ENCODE measurements at regions of chr11 and their contacts with region 1.

Region 1: DNA sequence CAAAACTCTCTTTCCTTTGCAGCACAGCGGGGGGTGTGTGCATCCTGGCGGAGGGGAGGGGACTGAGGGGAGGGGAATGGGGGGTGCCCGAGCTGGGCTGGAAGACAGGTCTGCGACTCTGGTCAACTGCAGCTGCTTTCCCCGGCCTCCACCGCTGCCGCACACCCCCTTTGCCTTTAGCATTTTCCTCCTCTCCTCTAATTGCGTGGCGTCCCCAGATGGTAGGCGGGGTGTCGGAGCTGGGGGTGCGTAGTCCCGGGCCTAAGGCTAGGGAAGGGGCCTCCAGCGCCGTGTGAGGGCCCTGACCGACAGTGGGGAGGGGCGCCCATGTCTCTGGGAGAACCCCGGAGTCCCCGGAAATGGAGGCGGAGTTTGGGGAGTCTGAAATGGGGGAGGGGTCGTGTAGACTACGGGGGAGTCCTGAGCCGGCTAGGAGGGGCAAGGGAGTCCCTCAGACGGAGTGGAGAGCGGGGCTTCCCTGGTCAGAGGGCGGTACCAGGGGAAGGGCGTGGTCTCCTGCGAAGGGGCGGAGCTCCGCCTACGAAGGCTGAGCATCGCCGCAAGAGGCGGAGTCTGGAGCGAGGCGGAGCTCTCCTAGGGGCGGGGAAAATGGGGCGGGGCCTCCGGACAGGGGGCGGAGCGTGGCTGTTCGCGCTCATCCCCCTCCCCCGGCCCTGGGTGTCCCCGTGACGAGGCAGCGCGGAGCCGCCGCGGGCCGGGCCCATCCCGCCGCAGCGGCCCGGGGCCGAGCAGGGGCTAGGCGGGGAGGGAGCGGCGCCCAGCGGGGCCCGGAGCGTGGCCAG is at the start of gene PELI3:
- DNase-seq: peak; percentile 92
- ATAC-seq: peak; percentile 92
- H3K4me3 Mint-ChIP-seq: peak within 1 kb of the TSS; percentile 88
- H3K27ac Mint-ChIP-seq: peak within 1 kb of the TSS; percentile 84
- H3K4me1 Mint-ChIP-seq: peaks cover 43% of the 10 kb centered on the region
- H3K27me3 Mint-ChIP-seq: no peaks in the 10 kb centered on the region
- CTCF ChIP-seq: no peak
- total RNA-seq, gene PELI3: 8.5 and 9.1 TPM in 2 replicates

Region 2: GRCh38 chr11:66084821-66085475 is 381.5 kb before region 1 on chr11:
- CTCF ChIA-PET with region 1: no interaction called
- POLR2A ChIA-PET with region 1: no interaction called
- intact Hi-C with region 1: no loop called
- DNase-seq: no peak
- ATAC-seq: no peak
- H3K4me3 Mint-ChIP-seq: no peak overlapping the region
- H3K27ac Mint-ChIP-seq: peak overlapping the region; percentile 55
- H3K4me1 Mint-ChIP-seq: peaks cover 92% of the 10 kb centered on the region
- H3K27me3 Mint-ChIP-seq: no peaks in the 10 kb centered on the region
- CTCF ChIP-seq: no peak

Region 3: GRCh38 chr11:66288671-66289547 is 177.5 kb before region 1 on chr11 and contains the start of gene YIF1A:
- CTCF ChIA-PET with region 1: no interaction called
- POLR2A ChIA-PET with region 1: interaction called, 6 read pairs
- intact Hi-C with region 1: loop called (anchors 1 kb)
- DNase-seq: peak; percentile 93
- ATAC-seq: peak; percentile 95
- H3K4me3 Mint-ChIP-seq: peak within 1 kb of the TSS; percentile 89
- H3K27ac Mint-ChIP-seq: peak within 1 kb of the TSS; percentile 90
- H3K4me1 Mint-ChIP-seq: peaks cover 31% of the 10 kb centered on the region
- H3K27me3 Mint-ChIP-seq: peaks cover 17% of the 10 kb centered on the region
- CTCF ChIP-seq: no peak
- total RNA-seq, gene YIF1A: 53.4 and 62.6 TPM in 2 replicates

Region 4: GRCh38 chr11:66336234-66337102 is 130.0 kb before region 1 on chr11 and contains the start of gene RIN1:
- CTCF ChIA-PET with region 1: no interaction called
- POLR2A ChIA-PET with region 1: no interaction called
- intact Hi-C with region 1: no loop called
- DNase-seq: no peak
- ATAC-seq: peak; percentile 78
- H3K4me3 Mint-ChIP-seq: peak within 1 kb of the TSS; percentile 78
- H3K27ac Mint-ChIP-seq: peak within 1 kb of the TSS; percentile 50
- H3K4me1 Mint-ChIP-seq: peaks cover 22% of the 10 kb centered on the region
- H3K27me3 Mint-ChIP-seq: peaks cover 6% of the 10 kb centered on the region
- CTCF ChIP-seq: no peak
- total RNA-seq, gene RIN1: 0.76 and 0.98 TPM in 2 replicates

Region 5: DNA sequence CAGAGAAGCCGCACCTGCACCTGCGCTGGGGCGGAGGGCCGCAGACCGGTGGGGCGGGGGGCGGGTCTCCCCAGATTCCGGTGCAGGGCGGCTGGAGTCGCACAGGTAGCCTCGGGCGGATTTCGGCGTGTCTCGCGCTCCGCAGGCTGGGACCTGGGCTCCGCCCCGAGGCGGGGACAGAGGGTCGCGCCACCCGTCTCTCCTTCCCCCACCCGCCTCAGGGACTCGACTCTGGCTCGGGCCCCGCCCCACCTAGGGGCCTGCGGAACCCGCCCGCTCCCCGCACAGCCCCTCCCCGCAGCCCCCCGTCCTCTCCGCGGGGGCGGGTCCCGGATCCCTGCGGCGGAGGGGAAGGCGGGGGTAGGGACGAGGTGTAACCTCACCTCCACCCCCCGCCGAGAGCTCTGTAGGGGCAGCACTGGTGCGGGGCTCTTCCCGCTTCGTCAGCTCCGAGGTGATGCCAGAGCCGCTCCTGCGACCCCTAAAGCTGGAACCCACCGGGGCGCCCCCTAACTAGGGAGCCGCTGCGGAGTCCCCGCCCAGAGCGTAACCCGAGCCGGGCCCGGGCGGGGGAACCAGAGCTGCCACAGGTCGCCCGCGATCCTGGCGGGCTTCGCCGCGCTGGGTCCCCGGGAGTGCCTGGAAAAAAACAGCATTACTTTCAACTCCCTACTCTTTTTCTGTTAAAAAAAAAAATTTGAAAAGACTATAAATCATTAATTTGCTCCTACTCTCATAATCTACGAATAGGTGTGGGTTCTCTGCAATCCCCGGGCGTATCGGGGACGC is 94.6 kb before region 1 on chr11 and contains the start of gene SLC29A2:
- CTCF ChIA-PET with region 1: no interaction called
- POLR2A ChIA-PET with region 1: no interaction called
- intact Hi-C with region 1: loop called (anchors 5 kb)
- DNase-seq: peak; percentile 78
- ATAC-seq: peak; percentile 87
- H3K4me3 Mint-ChIP-seq: peak within 1 kb of the TSS; percentile 90
- H3K27ac Mint-ChIP-seq: peak within 1 kb of the TSS; percentile 94
- H3K4me1 Mint-ChIP-seq: peaks cover 15% of the 10 kb centered on the region
- H3K27me3 Mint-ChIP-seq: no peaks in the 10 kb centered on the region
- CTCF ChIP-seq: no peak
- total RNA-seq, gene SLC29A2: 13.5 and 17.1 TPM in 2 replicates

Region 6: DNA sequence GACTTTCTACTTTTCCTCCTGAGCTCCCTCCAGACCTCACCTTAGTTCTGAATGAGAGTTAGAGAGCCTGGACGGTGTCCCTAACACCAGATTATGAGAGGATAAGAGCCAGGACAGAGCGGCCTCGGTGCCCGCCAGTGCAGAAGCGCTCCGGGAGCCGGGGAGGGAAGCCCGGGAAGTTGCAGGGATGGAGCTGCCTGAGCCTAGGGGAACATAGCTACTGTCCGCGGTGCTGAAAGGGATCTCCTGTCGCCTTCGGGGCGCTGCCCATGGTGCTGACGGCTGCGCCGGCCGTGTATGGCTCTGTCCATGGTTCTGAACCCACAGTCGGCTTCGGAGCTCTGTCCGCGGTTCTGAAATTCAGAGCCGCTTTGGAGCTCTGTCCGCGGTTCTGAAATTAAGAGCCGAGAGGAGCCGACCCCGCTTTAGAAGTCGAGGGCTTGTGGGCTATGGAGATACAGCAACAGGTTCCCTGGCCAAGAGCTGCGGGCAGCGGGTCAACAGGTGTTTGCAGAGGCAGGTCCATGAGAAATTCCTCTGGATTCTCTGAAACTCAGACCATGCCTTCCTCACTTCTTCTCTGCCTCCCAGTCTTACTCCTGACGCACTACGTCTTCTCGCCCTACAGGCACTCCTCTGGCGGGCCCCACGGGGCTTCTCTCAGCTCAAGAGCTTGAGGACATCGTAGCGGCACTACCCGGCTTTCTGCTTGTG is 44.8 kb before region 1 on chr11:
- CTCF ChIA-PET with region 1: interaction called, 3 read pairs
- POLR2A ChIA-PET with region 1: interaction called, 13 read pairs
- intact Hi-C with region 1: loop called (anchors 2 kb)
- DNase-seq: peak; percentile 83
- ATAC-seq: peak; percentile 92
- H3K4me3 Mint-ChIP-seq: no peak overlapping the region
- H3K27ac Mint-ChIP-seq: no peak overlapping the region
- H3K4me1 Mint-ChIP-seq: peaks cover 9% of the 10 kb centered on the region
- H3K27me3 Mint-ChIP-seq: peaks cover 29% of the 10 kb centered on the region
- CTCF ChIP-seq: no peak

Region 7: GRCh38 chr11:66491315-66491935 is 25.0 kb after region 1 on chr11:
- CTCF ChIA-PET with region 1: no interaction called
- POLR2A ChIA-PET with region 1: no interaction called
- intact Hi-C with region 1: no loop called
- DNase-seq: no peak
- ATAC-seq: peak; percentile 31
- H3K4me3 Mint-ChIP-seq: no peak overlapping the region
- H3K27ac Mint-ChIP-seq: no peak overlapping the region
- H3K4me1 Mint-ChIP-seq: no peaks in the 10 kb centered on the region
- H3K27me3 Mint-ChIP-seq: no peaks in the 10 kb centered on the region
- CTCF ChIP-seq: no peak

Region 8: GRCh38 chr11:66510271-66510989 is 44.0 kb after region 1 on chr11 and contains the start of gene BBS1:
- CTCF ChIA-PET with region 1: no interaction called
- POLR2A ChIA-PET with region 1: interaction called, 3 read pairs
- intact Hi-C with region 1: loop called (anchors 1 kb)
- DNase-seq: peak; percentile 82
- ATAC-seq: peak; percentile 98
- H3K4me3 Mint-ChIP-seq: peak within 1 kb of the TSS; percentile 91
- H3K27ac Mint-ChIP-seq: peak within 1 kb of the TSS; percentile 42
- H3K4me1 Mint-ChIP-seq: peaks cover 14% of the 10 kb centered on the region
- H3K27me3 Mint-ChIP-seq: no peaks in the 10 kb centered on the region
- CTCF ChIP-seq: no peak
- total RNA-seq, gene BBS1: 30.5 and 38.8 TPM in 2 replicates

Region 9: DNA sequence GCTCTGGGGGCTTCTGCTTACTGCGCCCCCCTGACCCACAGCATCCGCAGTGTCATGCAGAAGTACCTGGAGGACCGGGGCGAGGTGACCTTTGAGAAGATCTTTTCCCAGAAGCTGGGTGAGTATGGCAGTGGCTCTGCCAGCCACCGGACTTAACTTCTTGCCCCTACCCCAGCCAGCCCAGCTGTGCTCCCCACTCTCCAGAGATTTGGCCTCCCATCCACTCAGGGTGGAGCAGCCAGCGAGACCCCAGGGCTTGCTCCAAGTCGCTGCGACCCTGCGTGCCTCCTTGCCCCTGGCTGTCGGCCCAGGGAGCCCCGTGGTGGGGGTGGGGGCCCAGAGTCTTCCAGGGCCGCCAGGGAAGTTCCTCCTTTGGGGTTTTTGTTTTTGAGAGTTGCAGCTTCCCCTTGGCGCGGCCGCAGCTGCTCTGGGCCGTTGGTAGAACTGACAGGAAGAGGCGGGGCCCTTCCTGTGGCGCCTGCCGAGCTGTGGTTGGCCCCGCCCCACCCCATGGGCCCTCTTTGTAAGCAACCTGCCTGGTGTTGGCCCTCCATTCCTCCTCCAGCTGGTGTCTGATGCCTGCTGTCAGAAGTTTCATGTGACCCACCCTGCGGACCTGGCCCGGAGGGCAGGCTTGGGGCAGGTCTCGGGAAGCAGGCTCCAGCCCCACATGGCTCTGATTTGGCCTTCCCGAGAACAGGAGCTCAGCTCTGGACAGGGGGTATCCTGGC is 811.0 kb after region 1 on chr11:
- CTCF ChIA-PET with region 1: no interaction called
- POLR2A ChIA-PET with region 1: no interaction called
- intact Hi-C with region 1: no loop called
- DNase-seq: peak; percentile 85
- ATAC-seq: peak; percentile 93
- H3K4me3 Mint-ChIP-seq: peak overlapping the region; percentile 59
- H3K27ac Mint-ChIP-seq: peak overlapping the region; percentile 98
- H3K4me1 Mint-ChIP-seq: peaks cover 85% of the 10 kb centered on the region
- H3K27me3 Mint-ChIP-seq: no peaks in the 10 kb centered on the region
- CTCF ChIP-seq: no peak